Tibial artery (tissue), 4 donors: ENCODE measurements at regions of chr9 and their contacts with region 1.

Region 1: DNA sequence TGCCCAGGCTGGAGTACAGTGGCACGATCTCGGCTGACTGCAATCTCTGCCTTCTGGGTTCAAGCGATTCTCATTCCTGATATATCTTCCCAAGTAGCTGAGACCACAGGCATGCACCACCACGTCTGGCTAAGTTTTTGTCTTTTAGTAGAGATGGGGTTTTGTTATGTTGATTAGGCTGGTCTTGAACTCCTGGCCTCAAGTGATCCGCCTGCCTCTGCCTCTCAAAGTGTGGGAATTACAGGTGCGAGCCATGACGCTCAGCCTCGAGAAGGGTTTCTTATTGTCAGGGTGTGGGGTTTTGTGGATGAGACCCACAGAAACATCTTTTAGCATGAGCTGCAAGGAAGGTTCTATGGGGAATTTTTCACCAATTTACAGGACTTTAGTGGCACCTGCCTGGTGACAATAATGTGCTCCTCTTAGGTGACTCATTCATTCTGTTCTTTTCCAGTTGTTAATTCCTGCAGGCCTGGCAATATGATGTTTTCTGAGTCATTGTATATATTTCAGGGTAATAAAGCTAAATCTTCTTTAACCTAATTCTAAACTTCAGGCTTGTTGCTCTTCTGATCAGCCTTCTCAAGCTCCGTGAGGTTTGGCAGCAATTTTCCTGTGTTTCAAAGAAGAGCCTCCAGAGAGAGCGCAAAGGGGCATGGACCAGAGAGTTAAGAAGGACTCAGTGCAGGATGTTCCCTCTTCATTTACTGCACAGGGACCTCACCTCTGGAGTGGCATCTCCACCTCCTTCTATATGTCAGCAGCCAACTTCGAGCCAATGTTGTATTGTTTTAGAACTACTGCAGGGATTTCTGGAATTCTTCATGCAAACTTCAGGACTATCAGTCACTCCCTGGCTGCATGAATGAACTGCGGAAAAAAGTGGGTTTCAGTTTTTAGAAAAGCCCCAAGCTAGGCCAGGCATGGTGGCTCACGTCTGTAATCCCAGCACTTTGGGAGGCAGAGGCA is 77.8 kb upstream of the ZNF618 start:
- DNase-seq: no peak
- H3K4me3 ChIP-seq: no peak overlapping the region
- H3K27ac ChIP-seq: no peak overlapping the region
- H3K4me1 ChIP-seq: no peaks in the 10 kb centered on the region
- H3K27me3 ChIP-seq: no peaks in the 10 kb centered on the region
- CTCF ChIP-seq: no peak

Region 2: GRCh38 chr9:113427629-113428028 is 370.7 kb before region 1 on chr9:
- intact Hi-C with region 1: loop called (anchors 10 kb)
- DNase-seq: no peak
- H3K4me3 ChIP-seq: no peak overlapping the region
- H3K27ac ChIP-seq: no peak overlapping the region
- H3K4me1 ChIP-seq: no peaks in the 10 kb centered on the region
- H3K27me3 ChIP-seq: peaks cover 0 to 4% of the 10 kb centered on the region in 2 donors
- CTCF ChIP-seq: no peak